ENCODE measurements at regions of chr4 and their contacts with region 1.

Region 1: DNA sequence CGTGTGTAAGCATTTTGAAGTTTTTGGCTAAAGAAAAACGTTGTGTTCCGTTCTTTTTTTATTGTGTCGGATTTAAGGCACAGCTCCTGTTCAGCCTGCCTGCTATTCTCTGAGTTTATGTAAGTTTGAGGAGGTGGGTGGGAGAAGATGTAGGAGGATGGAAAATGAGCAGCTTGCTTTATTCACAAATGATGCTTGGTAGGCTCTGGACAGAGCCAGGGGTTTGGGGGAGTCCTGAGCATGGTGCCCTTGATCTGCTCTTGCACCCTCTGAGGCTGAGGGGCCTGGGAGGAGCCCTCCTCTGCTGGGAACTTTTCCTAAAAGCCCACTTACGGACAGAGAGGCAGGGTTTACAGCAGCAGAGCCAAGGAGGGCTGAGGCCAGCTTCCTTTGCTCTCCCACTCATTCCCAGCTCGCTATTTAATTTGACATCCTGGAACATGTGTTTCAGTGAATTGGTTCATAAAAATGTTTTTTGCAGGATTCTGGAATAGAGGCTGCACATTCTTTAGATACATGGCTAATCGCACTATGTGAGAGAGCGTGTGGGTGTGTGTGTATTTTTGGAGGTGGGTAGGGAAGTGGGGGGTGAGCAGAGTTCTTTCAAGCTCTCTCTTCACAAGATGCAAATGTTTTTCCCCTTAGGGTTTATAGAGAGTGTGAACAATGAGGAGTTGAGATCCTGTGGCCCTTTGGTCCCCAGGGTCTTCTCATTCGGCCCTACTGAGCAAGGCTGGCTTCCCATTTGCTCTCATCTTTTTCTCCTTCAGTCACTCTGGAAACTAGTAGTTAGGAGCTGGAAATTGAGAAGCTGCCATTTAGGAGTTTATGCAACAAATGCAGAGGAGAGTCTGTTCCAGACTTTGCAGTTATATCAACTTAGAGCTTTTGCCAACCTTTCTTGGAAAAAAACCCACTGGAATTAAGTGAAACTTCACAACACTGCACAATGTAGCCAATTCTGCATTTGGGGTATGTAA is 32.1 kb downstream of the TMEM131L start:
- DNase-seq: no peak
- ATAC-seq: no peak
- H3K4me3 Mint-ChIP-seq: peak overlapping the region; percentile 67
- H3K27ac Mint-ChIP-seq: peak overlapping the region; percentile 91
- H3K4me1 Mint-ChIP-seq: peaks cover 92% of the 10 kb centered on the region
- H3K27me3 Mint-ChIP-seq: no peaks in the 10 kb centered on the region

Region 2: GRCh38 chr4:153488006-153488891 is 10.0 kb before region 1 on chr4:
- CTCF ChIA-PET with region 1: interaction called, 12 read pairs
- POLR2A ChIA-PET with region 1: interaction called, 5 read pairs
- DNase-seq: peak; percentile 79
- ATAC-seq: peak; percentile 60
- H3K4me3 Mint-ChIP-seq: peak overlapping the region; percentile 57
- H3K27ac Mint-ChIP-seq: peak overlapping the region; percentile 90
- H3K4me1 Mint-ChIP-seq: peaks cover 85% of the 10 kb centered on the region
- H3K27me3 Mint-ChIP-seq: no peaks in the 10 kb centered on the region

Region 3: DNA sequence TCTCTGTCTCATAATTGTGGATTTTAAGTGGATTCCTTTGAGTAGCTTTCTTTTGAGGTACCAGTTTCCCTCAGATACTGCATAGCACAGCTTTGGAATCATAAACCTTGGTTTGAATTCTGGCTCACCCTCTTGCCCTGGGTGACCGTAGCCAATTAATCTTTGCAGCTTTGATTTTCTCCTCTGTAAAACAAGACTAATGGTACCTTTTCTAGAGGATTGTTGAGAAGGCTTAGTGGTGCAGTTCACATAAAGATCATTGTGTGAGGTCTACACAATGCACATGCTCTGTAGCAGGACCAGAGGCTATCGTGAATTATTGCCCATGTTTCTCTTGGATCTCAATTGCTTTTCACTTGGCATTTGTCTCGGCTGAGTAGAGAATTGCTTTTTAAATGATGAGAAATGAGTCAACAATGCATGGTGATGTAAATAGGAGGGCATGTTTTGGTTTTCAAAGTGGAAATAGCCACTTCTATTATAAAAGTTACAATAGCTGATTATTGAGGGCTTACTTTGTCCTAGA is 15.8 kb after region 1 on chr4:
- CTCF ChIA-PET with region 1: interaction called, 10 read pairs
- POLR2A ChIA-PET with region 1: no interaction called
- DNase-seq: no peak
- ATAC-seq: no peak
- H3K4me3 Mint-ChIP-seq: no peak overlapping the region
- H3K27ac Mint-ChIP-seq: no peak overlapping the region
- H3K4me1 Mint-ChIP-seq: peaks cover 50% of the 10 kb centered on the region
- H3K27me3 Mint-ChIP-seq: no peaks in the 10 kb centered on the region

Measured in activated CD8-positive, alpha-beta T cell treated with anti-CD3 and anti-CD28 coated beads, Interleukin-2, amount 10 ng/mL, durations not matched to agents 7 days and 5 days (primary cell).